ENCODE measurements at regions of chr17 and their contacts with region 1.

Region 1: GRCh38 chr17:78250891-78251794 is 19.7 kb downstream of the TMEM235 start:
- DNase-seq: peak; percentile 90 to 95
- ATAC-seq: peak; percentile 90
- H3K4me3 ChIP-seq: no peak overlapping the region
- H3K27ac ChIP-seq: no peak overlapping the region
- H3K4me1 ChIP-seq: no peaks in the 10 kb centered on the region
- H3K27me3 ChIP-seq: no peaks in the 10 kb centered on the region

Region 2: DNA sequence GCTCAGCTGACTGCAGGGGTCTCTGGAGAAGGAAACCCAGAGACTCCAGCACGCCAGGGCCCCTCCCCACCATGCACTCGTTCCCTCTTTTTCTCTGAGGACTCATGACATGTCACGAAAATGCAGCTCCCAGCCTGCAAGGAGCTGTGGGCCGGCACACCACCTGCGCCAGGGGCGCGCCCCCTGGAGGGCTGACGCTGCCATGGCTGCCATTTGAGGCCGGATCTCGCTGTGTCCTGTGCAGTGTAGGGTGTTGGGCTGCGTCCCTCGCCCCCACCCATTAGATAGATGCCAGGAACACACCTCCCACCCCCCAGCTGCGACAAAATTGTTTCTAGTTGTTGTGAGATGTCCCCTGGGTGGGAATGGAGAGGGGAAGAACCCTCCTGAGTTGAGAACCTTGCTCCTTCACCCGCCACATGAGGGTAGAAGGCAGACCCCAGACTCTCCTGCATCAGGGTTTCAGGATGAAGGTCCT is 74.6 kb before region 1 on chr17:
- intact Hi-C with region 1: loop called in 1 of 2 experiments (anchors 1 kb)
- DNase-seq: peak; percentile 85 to 91
- ATAC-seq: no peak
- H3K4me3 ChIP-seq: no peak overlapping the region
- H3K27ac ChIP-seq: peak overlapping the region in 1 of 2 donors; percentile 42
- H3K4me1 ChIP-seq: peaks cover 2 to 4% of the 10 kb centered on the region in 2 donors
- H3K27me3 ChIP-seq: no peaks in the 10 kb centered on the region